ENCODE measurements at regions of chr7 and their contacts with region 1.

Region 1: GRCh38 chr7:143008007-143008901 is 18.7 kb downstream of the OR9A2 start:
- DNase-seq: peak; percentile 69 to 80 (median 76)
- H3K4me3 ChIP-seq: no peak overlapping the region
- H3K4me3 Mint-ChIP-seq: peak overlapping the region in 1 of 8 donors; percentile 15
- H3K27ac ChIP-seq: no peak overlapping the region
- H3K27ac Mint-ChIP-seq: peak overlapping the region in 2 of 7 donors; percentile 5 to 65
- H3K4me1 ChIP-seq: peaks cover 3% of the 10 kb centered on the region
- H3K4me1 Mint-ChIP-seq: peaks cover 4 to 6% (median 6%) of the 10 kb centered on the region in 4 donors
- H3K27me3 ChIP-seq: no peaks in the 10 kb centered on the region
- H3K27me3 Mint-ChIP-seq: peaks cover 6 to 7% of the 10 kb centered on the region in 2 donors

Region 2: GRCh38 chr7:142301923-142302550 is 706.2 kb before region 1 on chr7:
- CTCF ChIA-PET with region 1: interaction called, 35 read pairs
- POLR2A ChIA-PET with region 1: no interaction called
- intact Hi-C with region 1: loop called (anchors 1 kb)
- DNase-seq: no peak
- H3K4me3 ChIP-seq: no peak overlapping the region
- H3K4me3 Mint-ChIP-seq: no peak overlapping the region
- H3K27ac ChIP-seq: no peak overlapping the region
- H3K27ac Mint-ChIP-seq: no peak overlapping the region
- H3K4me1 ChIP-seq: peaks cover 8% of the 10 kb centered on the region
- H3K4me1 Mint-ChIP-seq: peaks cover 14 to 28% (median 18%) of the 10 kb centered on the region in 4 donors
- H3K27me3 ChIP-seq: no peaks in the 10 kb centered on the region
- H3K27me3 Mint-ChIP-seq: peaks cover 15 to 18% of the 10 kb centered on the region in 2 donors

Region 3: DNA sequence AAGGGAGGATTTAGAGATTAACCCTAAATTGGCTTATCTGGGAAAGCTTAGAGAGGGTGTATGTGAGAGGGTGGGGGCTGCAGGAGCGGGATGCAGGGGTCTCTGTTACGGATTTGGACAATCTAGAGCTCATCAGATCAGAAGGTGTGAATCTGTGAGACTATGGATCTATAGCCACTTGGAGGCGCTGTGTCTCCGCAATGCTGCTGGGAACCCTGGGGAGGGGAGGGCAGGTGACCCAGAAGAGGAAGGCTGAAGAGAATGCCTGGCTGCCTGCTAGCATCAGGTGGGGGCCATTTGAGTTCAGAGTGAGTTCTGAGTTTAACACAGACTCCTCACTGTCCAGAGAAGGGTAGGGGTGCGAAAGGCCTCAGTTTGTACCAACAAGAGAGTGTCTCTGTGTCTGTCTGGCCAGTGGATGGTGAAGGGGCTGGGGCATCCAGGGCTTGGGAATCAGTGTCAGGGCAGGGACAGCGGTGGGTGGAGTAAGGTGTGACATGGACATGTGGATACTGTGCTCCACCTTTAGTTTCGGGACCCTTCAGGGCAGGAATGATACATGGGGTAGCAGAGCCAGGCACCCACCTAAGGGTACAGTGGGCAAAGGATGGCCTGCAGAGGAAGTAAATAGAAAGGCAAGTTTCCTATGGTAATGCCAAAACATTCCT is 563.1 kb before region 1 on chr7:
- CTCF ChIA-PET with region 1: no interaction called
- POLR2A ChIA-PET with region 1: no interaction called
- intact Hi-C with region 1: loop called (anchors 2 kb)
- DNase-seq: peak in 4 of 5 donors; percentile 29 to 46 (median 38)
- H3K4me3 ChIP-seq: no peak overlapping the region
- H3K4me3 Mint-ChIP-seq: peak overlapping the region in 5 of 8 donors; percentile 25 to 53 (median 40)
- H3K27ac ChIP-seq: no peak overlapping the region
- H3K27ac Mint-ChIP-seq: peak overlapping the region; percentile 46 to 88 (median 73)
- H3K4me1 ChIP-seq: peaks cover 28% of the 10 kb centered on the region
- H3K4me1 Mint-ChIP-seq: peaks cover 20 to 42% (median 32%) of the 10 kb centered on the region in 4 donors
- H3K27me3 ChIP-seq: no peaks in the 10 kb centered on the region
- H3K27me3 Mint-ChIP-seq: no peaks in the 10 kb centered on the region

Region 4: GRCh38 chr7:142603870-142604448 is 404.3 kb before region 1 on chr7:
- CTCF ChIA-PET with region 1: interaction called, 17 read pairs
- POLR2A ChIA-PET with region 1: no interaction called
- intact Hi-C with region 1: loop called (anchors 1 kb)
- DNase-seq: peak; percentile 50 to 59 (median 53)
- H3K4me3 ChIP-seq: no peak overlapping the region
- H3K4me3 Mint-ChIP-seq: peak overlapping the region in 4 of 8 donors; percentile 11 to 58 (median 28)
- H3K27ac ChIP-seq: no peak overlapping the region
- H3K27ac Mint-ChIP-seq: peak overlapping the region in 3 of 7 donors; percentile 13 to 57 (median 24)
- H3K4me1 ChIP-seq: no peaks in the 10 kb centered on the region
- H3K4me1 Mint-ChIP-seq: peaks cover under 1 to 12% (median 5%) of the 10 kb centered on the region in 4 donors
- H3K27me3 ChIP-seq: no peaks in the 10 kb centered on the region
- H3K27me3 Mint-ChIP-seq: no peaks in the 10 kb centered on the region

Region 5: DNA sequence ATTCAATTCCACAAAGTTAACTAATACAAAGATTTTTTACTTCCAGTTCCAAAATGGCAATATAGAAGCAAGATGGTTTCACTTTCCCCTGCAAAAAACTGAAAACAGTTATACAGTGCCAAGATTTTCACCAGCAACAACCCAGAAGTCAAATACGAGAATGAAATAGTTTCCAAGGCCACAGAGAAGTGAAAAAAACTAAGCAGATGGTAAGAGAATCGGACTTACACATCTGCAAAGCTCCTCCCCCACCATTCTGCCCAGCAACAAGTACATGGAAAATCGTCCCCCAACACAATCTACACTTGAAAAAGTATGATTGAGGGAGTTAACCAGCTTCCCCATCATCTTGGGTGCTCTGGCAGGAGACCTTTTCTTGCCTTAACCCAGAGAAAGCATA is 15.8 kb before region 1 on chr7:
- CTCF ChIA-PET with region 1: interaction called, 17 read pairs
- POLR2A ChIA-PET with region 1: no interaction called
- intact Hi-C with region 1: no loop called
- DNase-seq: no peak
- H3K4me3 ChIP-seq: no peak overlapping the region
- H3K4me3 Mint-ChIP-seq: peak overlapping the region in 2 of 8 donors; percentile 29 to 57
- H3K27ac ChIP-seq: no peak overlapping the region
- H3K27ac Mint-ChIP-seq: no peak overlapping the region
- H3K4me1 ChIP-seq: no peaks in the 10 kb centered on the region
- H3K4me1 Mint-ChIP-seq: no peaks in the 10 kb centered on the region
- H3K27me3 ChIP-seq: no peaks in the 10 kb centered on the region
- H3K27me3 Mint-ChIP-seq: peaks cover 8 to 18% of the 10 kb centered on the region in 2 donors

Region 6: GRCh38 chr7:143096146-143096545 is 87.9 kb after region 1 on chr7:
- CTCF ChIA-PET with region 1: no interaction called
- POLR2A ChIA-PET with region 1: no interaction called
- intact Hi-C with region 1: no loop called
- DNase-seq: no peak
- H3K4me3 ChIP-seq: no peak overlapping the region
- H3K4me3 Mint-ChIP-seq: no peak overlapping the region
- H3K27ac ChIP-seq: no peak overlapping the region
- H3K27ac Mint-ChIP-seq: no peak overlapping the region
- H3K4me1 ChIP-seq: no peaks in the 10 kb centered on the region
- H3K4me1 Mint-ChIP-seq: no peaks in the 10 kb centered on the region
- H3K27me3 ChIP-seq: no peaks in the 10 kb centered on the region
- H3K27me3 Mint-ChIP-seq: peaks cover 0 to 1% of the 10 kb centered on the region in 2 donors